OCI-LY7 (cell line): ENCODE measurements at regions of chr3 and their contacts with region 1.

Region 1: DNA sequence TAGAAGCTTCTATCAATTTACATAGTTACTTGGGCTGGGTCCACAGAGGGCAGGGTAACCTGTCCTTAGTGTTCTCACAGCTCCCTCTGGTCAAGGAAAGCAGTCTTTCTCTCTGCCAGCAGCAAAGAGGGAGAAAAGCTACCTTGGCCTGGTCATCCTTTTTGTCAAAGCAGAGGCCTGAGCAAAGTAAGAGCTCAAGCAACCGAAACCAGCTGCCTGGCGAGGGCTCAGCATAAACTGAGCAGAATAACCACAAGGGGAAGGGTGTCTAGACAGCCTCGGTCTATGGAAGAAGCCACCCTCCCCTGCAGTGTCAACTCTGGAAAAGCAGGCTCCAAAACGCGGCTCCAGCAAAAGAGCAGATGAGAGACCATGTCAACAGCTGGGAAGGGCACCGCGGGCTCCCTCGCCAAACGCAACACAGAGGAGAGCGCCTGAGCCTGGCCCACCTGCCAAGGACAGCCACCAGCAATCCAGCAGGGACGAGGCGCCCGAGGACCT is 17.4 kb downstream of the LRIG1 start:
- DNase-seq: peak; percentile 58
- H3K4me3 ChIP-seq: peak overlapping the region; percentile 37
- H3K27ac ChIP-seq: peak overlapping the region; percentile 51
- H3K4me1 ChIP-seq: peaks cover 100% of the 10 kb centered on the region
- CTCF ChIP-seq: no peak

Region 2: GRCh38 chr3:66472313-66473134 is 10.9 kb before region 1 on chr3:
- CTCF ChIA-PET with region 1: interaction called, 6 read pairs
- POLR2A ChIA-PET with region 1: interaction called, 23 read pairs
- intact Hi-C with region 1: no loop called
- DNase-seq: no peak
- H3K4me3 ChIP-seq: peak overlapping the region; percentile 49
- H3K27ac ChIP-seq: peak overlapping the region; percentile 13
- H3K4me1 ChIP-seq: peaks cover 85% of the 10 kb centered on the region
- CTCF ChIP-seq: no peak

Region 3: GRCh38 chr3:66495646-66496045 is 12.2 kb after region 1 on chr3:
- CTCF ChIA-PET with region 1: interaction called, 6 read pairs
- POLR2A ChIA-PET with region 1: interaction called, 100 read pairs
- intact Hi-C with region 1: no loop called
- DNase-seq: peak; percentile 79
- H3K4me3 ChIP-seq: peak overlapping the region; percentile 98
- H3K27ac ChIP-seq: peak overlapping the region; percentile 97
- H3K4me1 ChIP-seq: peaks cover 64% of the 10 kb centered on the region
- CTCF ChIP-seq: no peak